Activated T-helper 1 cell treated with anti-CD3 and anti-CD28 coated beads, Interleukin-12 subunit alpha, Interleukin-12 subunit beta, Interleukin-2, Interleukin-4 antibody, amounts not matched to agents 30 ng/mL and 10 ng/mL and 1 ng/mL, durations not matched to agents 14 hours and 24 hours and 36 hours (primary cell): ENCODE measurements at regions of chr2 and their contacts with region 1.

Region 1: GRCh38 chr2:7567646-7568045 is 650.4 kb downstream of the RNF144A start:
- DNase-seq: peak; percentile 47
- H3K4me3 Mint-ChIP-seq: peak overlapping the region; percentile 25
- H3K27ac Mint-ChIP-seq: peak overlapping the region; percentile 90
- H3K4me1 Mint-ChIP-seq: peaks cover 59% of the 10 kb centered on the region
- H3K27me3 Mint-ChIP-seq: no peaks in the 10 kb centered on the region

Region 2: DNA sequence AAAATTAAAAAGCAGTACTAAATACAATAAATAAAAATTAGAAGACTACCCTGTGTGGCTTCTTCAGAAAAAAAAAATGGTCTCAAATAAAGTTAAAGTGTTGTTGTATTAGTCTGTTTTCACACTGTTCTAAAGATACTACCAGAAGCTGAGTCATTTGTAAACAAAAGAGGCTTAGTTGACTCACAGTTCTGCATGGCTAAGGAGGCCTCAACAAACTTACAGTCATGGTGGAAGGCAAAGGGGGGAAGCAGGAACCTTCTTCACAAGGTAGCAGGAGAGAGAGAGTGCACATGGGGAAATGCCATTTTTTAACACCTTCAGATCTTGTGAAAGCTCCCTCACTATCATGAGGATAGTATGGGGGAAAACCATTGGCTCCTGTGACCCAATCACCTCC is 37.6 kb before region 1 on chr2:
- intact Hi-C with region 1: loop called (anchors 1 kb)
- DNase-seq: no peak
- H3K4me3 Mint-ChIP-seq: no peak overlapping the region
- H3K27ac Mint-ChIP-seq: peak overlapping the region; percentile 71
- H3K4me1 Mint-ChIP-seq: peaks cover 64% of the 10 kb centered on the region
- H3K27me3 Mint-ChIP-seq: no peaks in the 10 kb centered on the region

Region 3: GRCh38 chr2:7588295-7588694 is 20.6 kb after region 1 on chr2:
- intact Hi-C with region 1: loop called (anchors 1 kb)
- DNase-seq: no peak
- H3K4me3 Mint-ChIP-seq: peak overlapping the region; percentile 28
- H3K27ac Mint-ChIP-seq: peak overlapping the region; percentile 61
- H3K4me1 Mint-ChIP-seq: peaks cover 37% of the 10 kb centered on the region
- H3K27me3 Mint-ChIP-seq: no peaks in the 10 kb centered on the region

Region 4: DNA sequence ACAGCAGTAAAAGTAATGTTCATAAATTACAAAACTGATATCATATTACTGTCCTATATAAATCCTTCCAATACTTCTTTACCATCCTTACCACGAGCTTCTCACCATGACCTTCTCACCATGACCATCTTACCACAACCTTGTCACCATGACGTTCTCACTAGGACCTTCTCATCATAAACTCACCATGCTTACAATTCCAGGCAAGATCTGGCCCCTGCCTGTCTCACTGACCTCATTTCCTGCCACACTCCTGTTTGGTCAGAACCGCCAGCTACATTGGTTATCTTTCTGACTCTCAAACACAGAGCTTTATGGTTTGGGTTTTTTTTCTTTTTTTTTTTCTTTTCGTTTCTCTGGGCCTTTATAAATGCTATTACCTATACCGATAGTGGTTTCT is 177.2 kb after region 1 on chr2:
- intact Hi-C with region 1: loop called (anchors 5 kb)
- DNase-seq: peak; percentile 35
- H3K4me3 Mint-ChIP-seq: peak overlapping the region; percentile 8
- H3K27ac Mint-ChIP-seq: peak overlapping the region; percentile 81
- H3K4me1 Mint-ChIP-seq: peaks cover 44% of the 10 kb centered on the region
- H3K27me3 Mint-ChIP-seq: no peaks in the 10 kb centered on the region